A549 (cell line): ENCODE measurements at regions of chr2 and their contacts with region 1.

Region 1: DNA sequence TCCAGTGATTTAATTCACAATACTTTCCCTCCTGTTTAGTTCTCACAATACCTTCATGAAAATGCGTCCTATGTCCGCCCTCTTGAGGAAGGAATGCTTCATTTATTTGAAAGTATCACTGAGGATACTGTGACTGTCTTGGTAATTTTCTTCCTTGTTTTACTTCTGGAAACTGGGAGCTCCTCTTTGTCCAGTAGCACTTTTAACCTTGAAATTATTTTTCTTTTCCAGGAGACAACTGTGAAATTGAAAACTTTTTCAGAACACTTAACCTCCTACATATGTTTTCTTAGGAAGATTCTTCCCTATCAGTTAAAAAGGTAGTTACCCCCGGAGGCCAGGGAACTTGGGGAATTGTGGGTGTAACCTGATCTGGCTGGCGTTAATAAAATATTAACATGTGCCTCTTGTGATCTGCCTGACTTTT is 58.9 kb upstream of the STON1 start:
- DNase-seq: peak; percentile 35 to 79
- ATAC-seq: peak; percentile 97 to 98
- H3K4me3 ChIP-seq: no peak overlapping the region
- H3K27ac ChIP-seq: peak overlapping the region; percentile 15 to 69; a peak in 5 of 6 replicates
- H3K4me1 ChIP-seq: peaks cover 9% of the 10 kb centered on the region
- CTCF ChIP-seq: peak; percentile 95
- EP300 ChIP-seq: no peak
- POLR2A ChIP-seq: no peak
- RAD21 ChIP-seq: peak; percentile 68 to 76

Region 2: GRCh38 chr2:48420512-48421197 is 50.4 kb before region 1 on chr2:
- CTCF ChIA-PET with region 1: interaction called, 14 read pairs
- POLR2A ChIA-PET with region 1: no interaction called
- DNase-seq: peak; percentile 80 to 89
- ATAC-seq: peak; percentile 86 to 94
- H3K4me3 ChIP-seq: peak overlapping the region; percentile 14; the same call in 2 of the 3 replicates
- H3K27ac ChIP-seq: peak overlapping the region; percentile 75 to 85
- H3K4me1 ChIP-seq: peaks cover 23% of the 10 kb centered on the region
- CTCF ChIP-seq: peak; percentile 99
- EP300 ChIP-seq: 0 out of 5 replicates have a peak, but pooled peaks of 1 of the 2 experiments have one; percentile 25
- POLR2A ChIP-seq: no peak
- RAD21 ChIP-seq: peak; percentile 100

Region 3: GRCh38 chr2:48457227-48457626 is 13.8 kb before region 1 on chr2:
- CTCF ChIA-PET with region 1: interaction called, 42 read pairs
- POLR2A ChIA-PET with region 1: no interaction called
- DNase-seq: no peak
- ATAC-seq: no peak
- H3K4me3 ChIP-seq: no peak overlapping the region
- H3K27ac ChIP-seq: no peak overlapping the region
- H3K4me1 ChIP-seq: no peaks in the 10 kb centered on the region
- CTCF ChIP-seq: no peak
- EP300 ChIP-seq: no peak
- POLR2A ChIP-seq: no peak
- RAD21 ChIP-seq: no peak

Region 4: GRCh38 chr2:48488545-48488944 is 17.5 kb after region 1 on chr2:
- CTCF ChIA-PET with region 1: interaction called, 30 read pairs
- POLR2A ChIA-PET with region 1: no interaction called
- DNase-seq: no peak
- ATAC-seq: no peak
- H3K4me3 ChIP-seq: no peak overlapping the region
- H3K27ac ChIP-seq: no peak overlapping the region
- H3K4me1 ChIP-seq: no peaks in the 10 kb centered on the region
- CTCF ChIP-seq: no peak
- EP300 ChIP-seq: no peak
- POLR2A ChIP-seq: no peak
- RAD21 ChIP-seq: no peak

Region 5: GRCh38 chr2:48589170-48589767 is 118.2 kb after region 1 on chr2:
- CTCF ChIA-PET with region 1: interaction called, 12 read pairs
- POLR2A ChIA-PET with region 1: no interaction called
- DNase-seq: peak; percentile 44 to 54
- ATAC-seq: peak; percentile 51 to 79; a peak in 4 of 6 replicates
- H3K4me3 ChIP-seq: no peak overlapping the region
- H3K27ac ChIP-seq: no peak overlapping the region
- H3K4me1 ChIP-seq: no peaks in the 10 kb centered on the region
- CTCF ChIP-seq: peak; percentile 84
- EP300 ChIP-seq: no peak
- POLR2A ChIP-seq: no peak
- RAD21 ChIP-seq: peak; percentile 74 to 78